AG04450 (cell line): ENCODE measurements at regions of chr3 and their contacts with region 1.

Region 1: DNA sequence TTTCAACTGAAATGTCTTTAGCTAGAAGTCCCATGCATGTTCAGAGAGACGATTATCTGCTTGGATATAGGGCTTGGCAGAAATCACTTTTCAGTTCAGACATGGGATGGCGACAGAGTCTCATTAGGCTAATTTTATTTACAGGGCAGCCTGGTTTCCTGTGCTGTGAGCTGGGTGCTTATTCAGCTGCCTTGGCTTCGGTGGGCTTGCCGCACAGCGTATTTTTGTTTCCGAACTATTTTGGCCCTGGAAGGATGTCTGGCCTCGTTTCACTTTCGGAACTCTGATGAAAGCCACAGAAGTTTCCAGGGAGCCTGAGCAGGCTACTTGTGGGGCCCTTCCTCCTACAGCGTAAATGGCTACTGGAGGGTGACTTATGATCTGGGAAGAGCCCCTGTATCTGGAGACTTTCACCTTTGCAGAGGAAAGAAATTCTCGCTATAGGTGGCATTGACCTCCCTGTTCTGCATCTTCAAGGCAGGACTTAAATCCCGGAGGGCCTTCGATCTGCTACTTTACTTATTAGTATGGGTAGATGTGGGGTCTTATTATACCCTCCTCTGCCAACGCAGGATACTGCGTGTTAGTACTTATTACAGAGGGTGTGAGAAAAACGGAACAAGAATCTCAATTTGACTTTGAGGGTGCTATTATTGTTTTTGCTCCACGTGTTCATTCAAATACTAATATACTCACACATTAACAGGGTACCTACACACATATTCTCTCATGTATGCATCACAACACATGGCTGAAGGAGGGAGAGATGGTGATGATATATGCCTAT is 364.0 kb upstream of the RBMS3 start:
- DNase-seq: peak; percentile 32
- H3K4me3 ChIP-seq: peak overlapping the region; percentile 48
- H3K27ac ChIP-seq: peak overlapping the region; percentile 47
- H3K27me3 ChIP-seq: no peaks in the 10 kb centered on the region
- CTCF ChIP-seq: peak; percentile 49

Region 2: DNA sequence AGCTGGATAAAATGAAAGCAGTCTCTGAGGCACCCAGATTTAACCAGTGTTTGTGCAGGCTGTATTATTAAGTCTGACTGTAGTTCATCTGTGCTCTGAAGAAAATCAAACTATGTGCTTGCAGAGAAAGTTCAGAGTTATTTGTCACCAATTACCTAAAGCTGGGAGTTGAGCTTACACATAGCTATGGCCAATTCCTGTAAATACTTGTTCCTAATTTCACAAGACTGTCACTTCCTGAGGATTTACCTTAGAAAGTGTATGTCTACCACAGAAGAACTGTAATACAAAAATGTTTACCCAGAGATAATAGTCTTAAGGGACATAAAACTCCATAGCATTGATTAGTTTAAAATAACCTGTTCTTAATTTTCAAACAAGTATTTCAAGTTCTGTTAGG is 1061.1 kb after region 1 on chr3:
- CTCF ChIA-PET with region 1: interaction called, 12 read pairs
- POLR2A ChIA-PET with region 1: no interaction called
- DNase-seq: no peak
- H3K4me3 ChIP-seq: no peak overlapping the region
- H3K27ac ChIP-seq: no peak overlapping the region
- H3K27me3 ChIP-seq: no peaks in the 10 kb centered on the region
- CTCF ChIP-seq: no peak